Head of caudate nucleus (tissue), 42 donors: ENCODE measurements at regions of chr22 and their contacts with region 1.

Region 1: DNA sequence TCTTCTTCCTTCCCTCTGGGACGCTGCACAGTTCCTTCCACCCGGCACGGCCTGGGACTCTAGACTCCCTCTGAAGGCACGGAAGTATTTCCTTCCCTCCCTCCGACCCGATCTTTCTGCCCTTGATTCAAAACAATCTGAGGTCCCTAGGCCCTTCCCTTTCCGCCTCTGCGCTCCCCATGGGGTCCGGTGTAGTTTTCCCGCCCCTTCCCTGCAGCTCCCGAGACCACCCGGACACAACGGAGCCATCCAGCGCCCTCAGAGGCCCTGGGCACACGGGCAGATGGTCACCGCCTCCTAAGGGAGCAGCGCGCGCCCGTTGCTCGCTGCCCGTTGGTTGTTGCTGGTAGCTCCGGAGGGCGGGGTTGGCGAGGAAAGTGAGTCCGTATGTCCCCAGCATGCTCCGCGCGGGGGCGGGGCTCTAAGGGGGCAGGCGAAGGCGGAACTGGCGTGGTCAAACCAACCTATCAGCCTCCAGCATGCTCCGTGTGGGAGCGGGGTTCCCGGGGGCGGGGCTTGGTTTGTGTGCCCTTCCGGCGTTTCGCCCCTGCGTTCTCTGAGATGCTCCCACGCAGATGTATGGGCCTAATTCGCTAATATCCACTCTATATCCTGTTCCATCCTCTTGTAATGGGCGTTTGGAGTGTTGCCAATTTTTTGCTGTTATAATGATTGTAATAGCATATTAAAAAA is 19.6 kb downstream of the MIF start:
- DNase-seq: peak; percentile 98 to 100 (median 100)

Region 2: DNA sequence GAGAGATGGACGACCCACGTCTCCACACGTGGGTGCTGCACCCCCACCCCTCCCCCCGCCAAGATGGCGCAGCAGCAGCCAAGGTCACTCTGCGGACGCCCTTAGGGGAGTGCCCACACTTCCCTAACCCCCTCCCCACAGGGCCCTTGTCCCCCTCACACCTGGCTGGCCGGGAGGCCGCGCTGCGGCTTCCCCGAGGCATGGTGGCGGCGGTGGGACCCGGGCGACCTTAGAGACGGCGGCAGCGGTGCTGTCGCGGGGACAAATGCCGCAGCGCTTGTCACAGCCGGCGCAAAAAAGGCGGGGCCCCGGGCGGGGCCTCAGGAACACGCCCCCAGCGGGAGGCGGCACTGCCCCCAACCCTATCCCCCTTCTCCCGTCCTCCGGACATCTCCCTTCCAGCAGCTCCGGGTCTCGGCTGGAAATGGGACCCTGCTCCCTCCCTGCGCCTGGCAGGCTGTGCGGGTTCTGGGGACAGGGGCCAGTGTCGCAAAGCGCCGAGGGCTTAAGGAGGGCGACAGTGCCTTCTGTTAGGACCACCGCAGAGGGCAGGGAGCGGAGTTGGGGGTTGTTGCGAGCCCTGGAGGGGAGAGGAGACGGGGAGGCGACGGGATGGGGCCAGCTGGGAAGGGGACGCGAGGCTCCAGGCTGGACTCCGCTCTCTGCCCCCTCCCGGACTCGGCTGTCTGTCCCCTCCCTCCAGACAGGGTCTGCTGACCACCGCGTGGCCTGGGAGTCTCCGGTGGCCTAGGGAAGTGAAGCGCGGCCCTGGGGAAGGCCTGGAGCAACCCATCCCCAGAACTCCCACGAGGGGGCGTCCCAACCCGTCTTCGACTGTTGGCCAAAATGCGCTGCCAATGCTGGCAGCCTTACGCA is 145.9 kb before region 1 on chr22 and contains the start of gene CHCHD10:
- intact Hi-C with region 1: no loop called
- DNase-seq: peak; percentile 76 to 96 (median 90)

Region 3: DNA sequence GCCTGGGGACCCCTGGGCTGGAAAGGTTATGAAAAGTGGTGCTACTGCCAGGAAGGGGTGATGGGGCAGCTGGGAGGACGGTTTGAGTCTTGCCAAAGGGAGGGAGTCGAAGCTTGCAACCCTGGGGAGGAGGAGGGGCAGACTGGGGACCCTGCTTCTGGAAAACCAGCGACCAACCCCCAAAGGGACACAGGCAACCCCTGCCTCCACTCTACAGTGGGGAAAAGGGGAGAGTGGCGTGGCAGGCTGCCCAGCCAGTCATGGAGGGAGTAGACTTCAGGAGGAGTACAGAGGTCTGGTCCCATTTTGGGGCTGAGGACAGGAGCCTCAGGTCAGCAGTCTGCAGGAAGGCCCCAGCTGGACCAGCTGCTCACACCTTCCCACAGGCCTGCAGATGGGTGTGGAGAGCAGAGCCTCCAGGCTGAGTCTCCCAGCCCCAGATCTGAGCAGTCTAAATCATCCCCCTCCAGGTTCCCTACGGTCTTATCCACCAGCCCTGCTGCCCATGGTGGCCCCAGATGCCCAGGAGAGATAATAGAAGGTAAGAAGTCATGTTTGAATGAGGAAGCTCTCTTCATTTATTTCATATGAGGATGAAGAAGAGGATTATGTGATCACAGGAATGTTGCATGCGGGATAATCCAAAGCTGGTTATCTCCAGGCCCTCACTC is 57.1 kb after region 1 on chr22:
- intact Hi-C with region 1: loop called (anchors 10 kb)
- DNase-seq: no peak